ENCODE measurements at regions of chr12 and their contacts with region 1.

Region 1: DNA sequence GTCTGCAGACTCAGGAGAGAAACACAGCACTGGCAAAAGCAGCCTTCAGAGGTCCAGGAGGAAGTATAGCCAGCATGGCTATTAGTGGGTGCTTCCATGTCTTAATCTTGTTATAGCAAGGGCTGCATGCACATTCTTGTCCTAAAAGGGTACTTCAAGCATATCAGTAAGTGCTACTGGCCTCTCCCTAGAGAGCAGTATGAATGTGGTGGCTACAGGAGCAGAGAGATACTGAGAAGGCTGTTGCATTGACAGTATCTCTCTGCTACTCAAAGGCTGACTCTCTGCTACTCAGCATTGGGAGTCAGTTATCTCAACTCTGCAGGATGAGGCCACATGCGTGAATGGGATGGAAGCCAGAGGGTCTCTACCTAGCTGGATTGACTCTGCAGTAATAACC is 2.0 kb downstream of the GARIN6 start:
- DNase-seq: no peak
- H3K4me3 ChIP-seq: no peak overlapping the region
- H3K27ac ChIP-seq: no peak overlapping the region
- H3K4me1 ChIP-seq: no peaks in the 10 kb centered on the region
- H3K27me3 ChIP-seq: no peaks in the 10 kb centered on the region
- CTCF ChIP-seq: no peak
- EP300 ChIP-seq: no peak
- POLR2A ChIP-seq: no peak

Region 2: GRCh38 chr12:98002712-98003493 is 1646.6 kb before region 1 on chr12:
- in situ Hi-C with region 1: no loop called
- intact Hi-C with region 1: no loop called
- DNase-seq: peak; percentile 8
- H3K4me3 ChIP-seq: no peak overlapping the region
- H3K27ac ChIP-seq: no peak overlapping the region
- H3K4me1 ChIP-seq: no peaks in the 10 kb centered on the region
- H3K27me3 ChIP-seq: no peaks in the 10 kb centered on the region
- CTCF ChIP-seq: peak in 1 of 5 experiments; percentile 27
- EP300 ChIP-seq: no peak
- POLR2A ChIP-seq: no peak

Region 3: DNA sequence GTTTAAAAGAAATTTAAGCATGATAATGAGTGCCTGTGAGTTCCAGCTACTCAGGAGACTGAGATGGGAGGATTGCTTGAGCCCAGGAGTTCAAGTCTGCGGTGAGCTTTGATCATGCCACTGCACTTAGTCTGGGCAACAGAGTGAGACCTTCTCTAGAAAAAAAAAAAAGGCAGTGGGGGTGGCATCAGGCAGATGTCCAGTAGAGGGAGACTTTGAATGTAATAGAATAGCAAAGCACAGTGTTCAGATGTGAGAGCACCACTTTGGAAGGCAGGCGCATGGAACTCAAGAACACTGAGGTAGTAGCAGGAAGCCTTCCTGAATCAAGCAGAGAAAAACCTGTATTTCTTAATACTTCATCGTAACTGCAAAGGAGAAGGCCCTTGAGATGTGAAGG is 396.5 kb before region 1 on chr12:
- in situ Hi-C with region 1: no loop called
- intact Hi-C with region 1: no loop called
- DNase-seq: no peak
- H3K4me3 ChIP-seq: no peak overlapping the region
- H3K27ac ChIP-seq: no peak overlapping the region
- H3K4me1 ChIP-seq: no peaks in the 10 kb centered on the region
- H3K27me3 ChIP-seq: no peaks in the 10 kb centered on the region
- CTCF ChIP-seq: no peak
- EP300 ChIP-seq: no peak
- POLR2A ChIP-seq: no peak

Region 4: DNA sequence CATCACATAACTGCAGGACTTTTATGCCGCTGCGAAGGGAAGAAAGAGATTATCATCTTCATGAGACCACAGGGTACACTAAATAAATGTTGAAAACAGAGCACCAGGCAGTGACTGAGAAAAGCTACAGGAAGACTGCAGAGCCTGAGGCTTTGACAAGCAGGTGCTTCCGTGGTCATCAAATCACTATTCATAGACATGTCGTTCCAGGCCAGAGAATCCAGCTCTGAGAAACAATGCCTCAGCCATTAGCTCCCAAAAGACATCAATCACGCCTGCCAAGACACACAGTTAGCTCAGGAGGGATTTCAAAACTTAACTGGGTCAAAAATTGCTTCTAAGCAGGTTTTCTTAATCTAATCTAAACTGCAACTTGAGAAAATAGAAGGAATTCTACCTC is 49.2 kb before region 1 on chr12:
- in situ Hi-C with region 1: no loop called
- intact Hi-C with region 1: no loop called
- DNase-seq: no peak
- H3K4me3 ChIP-seq: no peak overlapping the region
- H3K27ac ChIP-seq: no peak overlapping the region
- H3K4me1 ChIP-seq: no peaks in the 10 kb centered on the region
- H3K27me3 ChIP-seq: no peaks in the 10 kb centered on the region
- CTCF ChIP-seq: no peak
- EP300 ChIP-seq: no peak
- POLR2A ChIP-seq: no peak

Region 5: DNA sequence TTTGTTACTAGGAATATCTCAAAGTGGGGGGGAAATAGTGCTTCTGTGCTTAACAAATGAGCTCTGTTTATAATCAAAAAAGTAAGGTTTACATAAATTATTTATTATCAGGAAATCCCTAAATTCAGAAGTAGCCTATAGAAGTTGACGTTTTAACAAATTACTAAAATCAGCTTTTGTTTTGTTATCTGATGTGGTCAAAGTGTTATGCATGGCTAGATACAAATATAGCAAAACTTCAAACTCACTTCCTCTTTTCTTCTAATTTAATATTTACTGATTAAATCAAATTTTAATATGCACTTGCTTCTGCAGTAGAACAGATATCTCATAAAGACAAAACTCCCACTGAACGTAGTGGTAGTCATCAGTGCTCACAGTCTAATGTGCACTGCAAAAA is 45.5 kb after region 1 on chr12:
- in situ Hi-C with region 1: no loop called
- intact Hi-C with region 1: no loop called
- DNase-seq: no peak
- H3K4me3 ChIP-seq: no peak overlapping the region
- H3K27ac ChIP-seq: no peak overlapping the region
- H3K4me1 ChIP-seq: no peaks in the 10 kb centered on the region
- H3K27me3 ChIP-seq: no peaks in the 10 kb centered on the region
- CTCF ChIP-seq: no peak
- EP300 ChIP-seq: no peak
- POLR2A ChIP-seq: no peak

Region 6: DNA sequence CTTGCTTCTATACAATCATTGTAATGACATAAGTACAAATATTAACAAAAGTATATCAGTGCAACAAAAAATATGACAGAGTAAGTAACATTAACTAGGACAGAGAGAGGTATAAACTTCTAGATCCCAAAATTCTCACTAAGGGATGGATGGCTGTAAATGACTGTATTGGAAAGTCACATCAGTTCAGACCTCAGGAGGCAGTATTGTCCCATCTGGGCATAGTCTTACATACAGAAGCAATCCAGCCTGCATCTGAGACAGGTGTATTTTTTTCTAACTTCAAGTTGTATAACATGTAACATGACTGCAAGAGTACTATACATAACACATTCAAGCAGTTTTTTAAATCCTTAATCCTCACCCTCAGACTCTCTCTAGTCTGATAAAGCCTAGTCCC is 97.0 kb after region 1 on chr12:
- in situ Hi-C with region 1: loop called in 1 of 4 experiments (anchors 25 kb)
- intact Hi-C with region 1: no loop called
- DNase-seq: no peak
- H3K4me3 ChIP-seq: no peak overlapping the region
- H3K27ac ChIP-seq: no peak overlapping the region
- H3K4me1 ChIP-seq: no peaks in the 10 kb centered on the region
- H3K27me3 ChIP-seq: no peaks in the 10 kb centered on the region
- CTCF ChIP-seq: no peak
- EP300 ChIP-seq: no peak
- POLR2A ChIP-seq: no peak